ENCODE measurements at regions of chr2 and their contacts with region 1.

Region 1: DNA sequence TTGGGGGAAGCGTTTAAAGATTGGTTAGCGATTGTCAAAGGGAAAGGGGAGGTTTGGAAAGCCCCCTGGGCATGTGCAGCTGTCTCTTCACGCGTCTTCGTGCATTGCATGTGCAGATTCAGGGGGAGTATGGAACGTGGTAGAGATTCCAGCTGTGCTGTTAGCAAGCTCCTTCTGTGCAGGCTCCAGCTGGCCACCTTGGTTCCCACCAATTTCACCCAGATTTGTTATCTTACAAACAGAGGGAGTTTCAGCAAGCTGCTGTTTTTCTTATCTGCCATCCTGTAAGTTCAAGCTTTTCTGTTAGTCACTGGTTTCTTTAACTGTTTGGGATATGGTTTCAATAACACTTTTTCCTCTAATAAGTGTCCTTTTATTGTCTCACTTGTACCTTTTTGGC is 30.4 kb downstream of the FARP2 start:
- DNase-seq: no peak
- H3K4me3 ChIP-seq: no peak overlapping the region
- CTCF ChIP-seq: no peak

Region 2: DNA sequence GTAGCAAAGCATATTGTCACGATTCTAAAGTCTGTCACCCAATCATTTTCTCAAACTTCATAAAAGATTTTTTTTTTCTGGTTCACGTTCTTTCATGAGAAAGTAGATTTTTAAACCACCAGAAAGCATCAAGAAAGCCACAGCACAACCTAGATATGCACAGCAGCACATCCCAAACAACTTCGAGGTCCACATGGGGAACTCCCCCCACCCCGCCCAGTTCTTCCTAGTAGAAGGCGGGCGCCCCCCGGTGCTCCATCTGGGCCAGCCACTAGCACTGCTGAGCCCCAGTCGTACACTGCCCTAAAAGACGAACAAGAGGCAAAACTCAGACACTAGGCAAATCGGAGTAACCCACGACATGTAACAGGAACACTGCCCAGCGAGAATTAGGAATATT is 86.5 kb before region 1 on chr2:
- in situ Hi-C with region 1: no loop called
- DNase-seq: no peak
- H3K4me3 ChIP-seq: no peak overlapping the region
- CTCF ChIP-seq: no peak

Region 3: GRCh38 chr2:241425368-241425767 is 38.8 kb after region 1 on chr2:
- in situ Hi-C with region 1: loop called (anchors 5 kb)
- DNase-seq: no peak
- H3K4me3 ChIP-seq: no peak overlapping the region
- CTCF ChIP-seq: no peak

Region 4: DNA sequence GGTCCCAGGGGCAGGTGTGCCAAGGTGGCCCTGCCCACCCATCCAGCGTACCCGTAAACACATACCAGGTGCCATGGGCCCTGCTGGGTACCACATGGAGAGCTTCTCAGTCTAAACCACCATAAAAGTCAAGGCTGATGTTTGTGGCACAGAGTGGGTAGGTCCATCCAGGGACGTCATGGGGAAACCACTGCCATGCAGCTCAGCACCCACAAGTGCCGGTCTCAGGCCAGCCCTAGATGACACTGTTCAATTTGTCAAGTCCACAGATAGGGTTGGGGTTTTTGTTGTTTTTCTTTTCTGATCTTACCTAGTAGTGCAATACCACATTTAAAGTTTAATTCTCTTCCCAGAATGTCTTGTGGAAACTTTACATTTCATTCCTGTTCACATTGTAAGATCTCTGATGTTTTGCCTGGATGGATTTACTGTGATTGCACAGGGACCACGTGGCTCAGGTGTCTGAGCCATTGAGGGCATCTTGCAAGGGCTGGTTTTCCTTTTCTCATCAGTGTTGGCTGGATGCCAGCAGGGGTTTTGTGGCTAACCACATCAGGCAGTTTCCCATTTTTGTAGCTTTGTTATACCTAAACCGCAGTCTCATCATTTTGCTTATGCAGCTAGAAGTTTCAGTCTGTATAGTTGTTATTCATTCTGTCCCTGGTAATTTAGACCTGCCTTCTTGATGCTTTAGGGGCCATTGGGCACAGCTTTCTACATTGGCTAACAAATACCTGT is 57.1 kb after region 1 on chr2:
- in situ Hi-C with region 1: no loop called
- DNase-seq: peak; percentile 90
- H3K4me3 ChIP-seq: no peak overlapping the region
- CTCF ChIP-seq: no peak

Region 5: GRCh38 chr2:241461693-241462677 is 75.5 kb after region 1 on chr2:
- in situ Hi-C with region 1: no loop called
- DNase-seq: no peak
- H3K4me3 ChIP-seq: no peak overlapping the region
- CTCF ChIP-seq: no peak

Region 6: DNA sequence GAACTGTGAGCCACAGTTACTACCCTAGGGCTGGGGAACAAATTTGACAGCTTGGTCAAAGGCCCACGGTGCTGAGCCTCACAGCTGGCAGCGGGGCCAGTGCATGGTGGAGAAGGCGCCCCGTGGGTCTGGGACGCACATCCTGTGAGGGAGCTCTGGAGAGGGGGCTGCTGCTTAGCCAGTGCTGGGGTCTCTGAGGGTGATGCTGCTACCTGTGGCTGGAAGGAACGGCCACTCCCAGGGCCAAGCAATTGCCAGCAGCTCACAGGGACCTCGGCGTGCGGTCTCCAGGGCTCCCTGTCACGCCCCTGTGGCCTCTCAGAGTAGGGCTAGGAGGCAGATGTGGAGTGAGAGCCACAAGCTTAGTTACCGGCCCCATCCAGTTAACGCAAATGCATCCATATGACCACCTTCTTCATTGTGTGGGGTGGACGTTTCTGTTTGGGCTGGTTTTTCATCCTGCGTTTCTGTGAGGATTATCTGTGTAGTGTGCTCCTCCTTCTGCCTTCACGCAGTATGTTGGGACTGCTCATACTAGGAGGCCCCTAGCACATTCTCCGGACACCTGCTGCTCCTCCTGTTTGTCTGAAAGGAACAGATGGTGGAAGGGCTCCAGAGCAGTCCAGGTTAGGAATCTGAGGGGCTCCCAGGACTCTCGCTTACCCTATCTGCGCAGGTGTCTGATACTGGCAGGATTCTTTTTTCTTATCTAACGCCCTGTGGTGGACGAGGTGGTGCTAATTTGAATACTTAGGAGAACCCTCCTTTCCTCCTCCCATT is 95.8 kb after region 1 on chr2:
- in situ Hi-C with region 1: loop called (anchors 5 kb)
- DNase-seq: no peak
- H3K4me3 ChIP-seq: no peak overlapping the region
- CTCF ChIP-seq: no peak

Region 7: GRCh38 chr2:241598480-241598879 is 212.0 kb after region 1 on chr2:
- in situ Hi-C with region 1: no loop called
- DNase-seq: no peak
- H3K4me3 ChIP-seq: no peak overlapping the region
- CTCF ChIP-seq: peak; percentile 31

Measured in astrocyte of the cerebellum (primary cell).